Activated T-helper 1 cell treated with anti-CD3 and anti-CD28 coated beads, Interleukin-12 subunit alpha, Interleukin-12 subunit beta, Interleukin-2, Interleukin-4 antibody, amounts not matched to agents 30 ng/mL and 10 ng/mL and 1 ng/mL, durations not matched to agents 14 hours and 24 hours and 36 hours (primary cell): ENCODE measurements at regions of chr7 and their contacts with region 1.

Region 1: DNA sequence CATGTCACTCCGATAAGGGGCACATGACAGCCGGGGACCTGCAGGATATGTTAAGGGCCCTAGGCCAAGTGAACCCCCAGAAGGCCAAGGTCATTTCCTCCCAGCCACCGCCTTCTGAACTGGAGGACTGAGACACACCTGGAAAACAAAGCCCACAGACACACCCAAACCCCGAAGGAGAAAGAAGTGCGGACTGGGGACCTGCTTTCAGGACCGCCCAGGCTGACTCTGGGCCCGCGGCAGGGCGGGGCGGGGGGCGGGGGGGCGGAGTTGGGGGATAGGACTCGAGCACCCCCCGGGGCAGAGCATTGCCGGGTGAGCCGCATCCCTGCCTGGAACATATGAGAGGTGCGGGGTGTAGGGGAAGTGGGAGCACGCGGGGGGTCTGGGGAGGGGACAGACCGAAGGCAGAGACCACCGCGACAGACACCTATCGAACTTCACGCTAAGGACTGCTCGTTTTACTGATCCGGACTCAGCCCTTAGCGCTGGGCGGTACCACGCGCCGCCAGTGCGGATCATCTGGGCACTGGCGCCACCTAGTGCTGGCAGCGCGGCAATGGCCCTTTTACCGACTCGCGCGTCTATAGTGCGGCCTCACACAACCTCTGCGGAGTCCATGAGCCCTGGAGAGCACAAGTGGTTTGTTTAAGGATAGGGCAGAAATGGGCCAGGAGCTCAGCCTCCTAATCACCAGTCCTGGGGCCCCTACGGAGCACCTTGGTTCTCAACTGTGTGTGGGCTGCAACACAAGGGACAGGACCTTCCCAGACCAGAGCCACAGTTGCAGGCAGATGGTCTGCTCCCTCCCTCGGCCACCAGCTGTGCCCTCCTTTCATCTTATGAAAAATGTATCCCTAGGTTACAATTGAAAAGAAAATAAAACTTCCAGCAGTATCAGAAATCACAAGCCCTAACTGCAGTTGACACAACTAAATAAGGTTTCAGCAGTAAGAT is 157.6 kb downstream of the HERPUD2 start:
- DNase-seq: peak; percentile 67
- H3K4me3 Mint-ChIP-seq: peak overlapping the region; percentile 58
- H3K27ac Mint-ChIP-seq: no peak overlapping the region
- H3K4me1 Mint-ChIP-seq: no peaks in the 10 kb centered on the region
- H3K27me3 Mint-ChIP-seq: peaks cover 21% of the 10 kb centered on the region

Region 2: DNA sequence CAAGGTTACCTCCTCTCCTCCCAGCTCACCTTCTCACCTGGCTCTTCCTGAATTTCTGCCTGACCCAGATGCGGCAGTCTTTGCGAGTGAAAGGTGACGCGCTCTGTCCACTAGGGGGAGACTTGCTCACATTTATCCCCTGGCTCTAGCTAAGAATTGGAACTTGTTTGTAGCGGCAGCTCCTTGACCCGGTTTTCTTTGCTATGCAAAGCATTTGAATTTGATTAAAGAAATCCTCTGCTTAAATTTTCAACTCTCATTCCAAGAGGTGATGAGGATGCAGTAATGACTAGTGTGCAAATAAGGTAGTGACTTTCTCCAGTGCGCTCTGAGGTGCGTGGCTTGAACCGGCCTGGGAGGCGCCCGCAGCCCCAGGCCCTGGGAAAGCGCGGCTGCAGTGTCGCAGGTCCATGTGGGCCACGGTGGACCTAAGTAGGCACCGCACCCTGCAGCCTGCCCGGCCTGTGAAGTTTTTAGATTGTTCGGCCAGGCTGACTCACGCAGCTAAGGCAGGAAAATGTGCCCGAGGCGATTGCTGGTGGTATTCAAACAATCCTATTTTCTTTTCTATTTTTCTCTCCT is 1216.3 kb before region 1 on chr7:
- intact Hi-C with region 1: loop called (anchors 2 kb)
- DNase-seq: peak; percentile 12
- H3K4me3 Mint-ChIP-seq: no peak overlapping the region
- H3K27ac Mint-ChIP-seq: no peak overlapping the region
- H3K4me1 Mint-ChIP-seq: no peaks in the 10 kb centered on the region
- H3K27me3 Mint-ChIP-seq: peaks cover 7% of the 10 kb centered on the region

Region 3: GRCh38 chr7:35185907-35186731 is 351.2 kb before region 1 on chr7:
- intact Hi-C with region 1: loop called (anchors 5 kb)
- DNase-seq: no peak
- H3K4me3 Mint-ChIP-seq: peak overlapping the region; percentile 43
- H3K27ac Mint-ChIP-seq: no peak overlapping the region
- H3K4me1 Mint-ChIP-seq: peaks cover 6% of the 10 kb centered on the region
- H3K27me3 Mint-ChIP-seq: peaks cover 29% of the 10 kb centered on the region

Region 4: GRCh38 chr7:35519971-35520809 is 17.2 kb before region 1 on chr7:
- intact Hi-C with region 1: loop called (anchors 1 kb)
- DNase-seq: peak; percentile 47
- H3K4me3 Mint-ChIP-seq: no peak overlapping the region
- H3K27ac Mint-ChIP-seq: no peak overlapping the region
- H3K4me1 Mint-ChIP-seq: no peaks in the 10 kb centered on the region
- H3K27me3 Mint-ChIP-seq: peaks cover 13% of the 10 kb centered on the region

Region 5: GRCh38 chr7:35906191-35906908 is 369.0 kb after region 1 on chr7:
- intact Hi-C with region 1: loop called (anchors 1 kb)
- DNase-seq: peak; percentile 43
- H3K4me3 Mint-ChIP-seq: no peak overlapping the region
- H3K27ac Mint-ChIP-seq: no peak overlapping the region
- H3K4me1 Mint-ChIP-seq: peaks cover 6% of the 10 kb centered on the region
- H3K27me3 Mint-ChIP-seq: no peaks in the 10 kb centered on the region